Posterior vena cava (tissue), 2 donors: ENCODE measurements at regions of chr21 and their contacts with region 1.

Region 1: GRCh38 chr21:31282095-31282709 is 61.9 kb downstream of the TIAM1 start:
- DNase-seq: no peak

Region 2: DNA sequence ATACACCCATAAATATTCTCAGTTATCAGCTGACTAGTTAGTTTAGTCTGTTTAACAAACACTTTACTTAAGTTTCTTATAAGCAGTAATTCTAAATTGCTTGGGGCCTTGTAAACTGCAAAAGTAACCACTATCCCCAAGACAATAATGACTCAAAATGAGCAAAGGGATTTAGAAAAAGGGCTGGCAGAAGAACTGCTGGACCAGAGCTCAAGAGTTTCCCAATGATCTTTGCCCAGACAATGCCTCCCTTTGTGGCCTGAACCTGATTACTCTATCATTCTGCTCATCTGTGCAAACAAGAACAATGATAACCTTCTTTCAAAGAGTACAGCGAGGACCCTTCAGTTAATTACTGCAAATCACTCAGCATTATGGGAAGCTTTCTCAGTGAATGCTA is 61.6 kb before region 1 on chr21:
- intact Hi-C with region 1: loop called in 1 of 2 experiments (anchors 10 kb)
- DNase-seq: no peak

Region 3: GRCh38 chr21:31235671-31236521 is 46.3 kb before region 1 on chr21:
- intact Hi-C with region 1: no loop called
- DNase-seq: no peak